A549 (cell line): ENCODE measurements at regions of chr12 and their contacts with region 1.

Region 1: GRCh38 chr12:96219698-96220206 is 25.6 kb downstream of the ELK3 start:
- DNase-seq: peak; percentile 98 to 99
- ATAC-seq: peak; percentile 97
- H3K4me3 ChIP-seq: peak overlapping the region; percentile 33
- H3K27ac ChIP-seq: peak overlapping the region; percentile 98
- H3K4me1 ChIP-seq: peaks cover 54% of the 10 kb centered on the region
- CTCF ChIP-seq: no peak
- EP300 ChIP-seq: peak in 1 of 2 experiments; percentile 31; a peak in 2 of 5 replicates
- POLR2A ChIP-seq: peak; percentile 75
- RAD21 ChIP-seq: peak; percentile 20 to 29; a peak in 1 of 5 replicates

Region 2: DNA sequence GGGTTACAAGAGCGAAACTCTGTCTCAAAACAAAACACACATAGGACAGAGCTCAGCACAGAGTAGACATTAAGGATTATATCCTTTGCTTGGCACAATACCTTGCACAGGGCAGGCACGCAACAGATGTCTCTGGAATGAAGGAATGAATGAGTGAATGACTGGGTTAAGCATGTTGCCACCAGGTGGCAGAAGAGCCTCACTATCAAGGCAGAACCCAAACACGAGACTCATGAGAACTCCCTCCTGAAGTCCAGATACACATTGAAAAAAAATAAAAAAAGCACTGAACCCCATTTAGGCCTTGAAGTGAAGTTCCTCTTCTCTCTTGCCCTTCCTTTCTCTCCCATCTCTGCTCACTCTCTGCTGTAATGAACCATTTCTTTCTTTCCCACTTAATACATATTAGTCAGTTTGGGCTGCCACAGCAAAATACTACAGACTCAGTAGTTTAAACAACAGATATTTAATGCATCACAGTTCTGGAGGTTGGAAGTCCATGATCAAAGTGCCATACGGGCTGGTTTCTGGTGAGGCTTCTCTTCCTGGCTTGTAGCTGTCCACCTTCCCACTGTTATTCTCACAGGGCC is 157.8 kb before region 1 on chr12:
- CTCF ChIA-PET with region 1: interaction called, 194 read pairs
- POLR2A ChIA-PET with region 1: no interaction called
- DNase-seq: peak; percentile 77 to 87
- ATAC-seq: peak; percentile 92 to 97
- H3K4me3 ChIP-seq: no peak overlapping the region
- H3K27ac ChIP-seq: peak overlapping the region in 1 of 2 experiments; percentile 8; a peak in 1 of 6 replicates
- H3K4me1 ChIP-seq: no peaks in the 10 kb centered on the region
- CTCF ChIP-seq: peak; percentile 87
- EP300 ChIP-seq: no peak
- POLR2A ChIP-seq: no peak
- RAD21 ChIP-seq: peak; percentile 97 to 99

Region 3: GRCh38 chr12:96143392-96143791 is 76.4 kb before region 1 on chr12:
- CTCF ChIA-PET with region 1: no interaction called
- POLR2A ChIA-PET with region 1: no interaction called
- DNase-seq: no peak
- ATAC-seq: no peak
- H3K4me3 ChIP-seq: no peak overlapping the region
- H3K27ac ChIP-seq: no peak overlapping the region
- H3K4me1 ChIP-seq: no peaks in the 10 kb centered on the region
- CTCF ChIP-seq: no peak
- EP300 ChIP-seq: no peak
- POLR2A ChIP-seq: no peak
- RAD21 ChIP-seq: no peak

Region 4: DNA sequence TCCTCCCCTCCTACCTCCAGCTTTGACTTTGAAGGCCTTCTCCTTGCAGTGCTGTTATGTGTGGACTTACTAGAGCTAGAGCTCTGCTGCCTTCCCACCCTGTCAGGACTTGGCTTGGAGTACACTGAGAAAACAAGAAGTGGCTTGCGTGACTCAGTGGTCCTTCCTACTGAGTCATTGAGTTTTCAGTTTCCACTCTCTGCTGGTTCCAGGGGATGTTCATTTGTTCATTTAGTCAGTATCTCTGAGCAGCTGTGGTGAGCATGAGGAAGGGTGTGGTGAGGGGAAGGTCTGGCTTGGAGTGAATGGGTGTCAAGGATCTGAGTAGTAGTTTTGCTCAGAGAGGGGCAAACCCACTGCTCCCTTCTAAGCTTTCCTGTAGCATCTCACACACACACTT is 42.7 kb before region 1 on chr12:
- CTCF ChIA-PET with region 1: interaction called, 15 read pairs
- POLR2A ChIA-PET with region 1: no interaction called
- DNase-seq: no peak
- ATAC-seq: no peak
- H3K4me3 ChIP-seq: no peak overlapping the region
- H3K27ac ChIP-seq: no peak overlapping the region
- H3K4me1 ChIP-seq: no peaks in the 10 kb centered on the region
- CTCF ChIP-seq: no peak
- EP300 ChIP-seq: no peak
- POLR2A ChIP-seq: no peak
- RAD21 ChIP-seq: no peak

Region 5: GRCh38 chr12:96208801-96209549 is 10.8 kb before region 1 on chr12:
- CTCF ChIA-PET with region 1: interaction called, 41 read pairs
- POLR2A ChIA-PET with region 1: interaction called, 7 read pairs
- DNase-seq: no peak
- ATAC-seq: peak; percentile 41 to 57; a peak in 5 of 6 replicates
- H3K4me3 ChIP-seq: no peak overlapping the region
- H3K27ac ChIP-seq: 0 out of 6 replicates have a peak overlapping the region, but pooled peaks of 1 of the 2 experiments have one; percentile 25
- H3K4me1 ChIP-seq: peaks cover 16% of the 10 kb centered on the region
- CTCF ChIP-seq: no peak; the same call in 2 of the 3 replicates
- EP300 ChIP-seq: no peak
- POLR2A ChIP-seq: 0 out of 2 replicates have a peak, but pooled peaks have one; percentile 19
- RAD21 ChIP-seq: peak in 1 of 2 experiments; percentile 33; a peak in 2 of 5 replicates

Region 6: GRCh38 chr12:96399919-96400797 is 180.4 kb after region 1 on chr12 and contains the start of gene CDK17:
- CTCF ChIA-PET with region 1: interaction called, 19 read pairs
- POLR2A ChIA-PET with region 1: interaction called, 27 read pairs
- DNase-seq: peak; percentile 78 to 86
- ATAC-seq: peak; percentile 66 to 77
- H3K4me3 ChIP-seq: peak within 1 kb of the TSS; percentile 90
- H3K27ac ChIP-seq: peak within 1 kb of the TSS; percentile 96
- H3K4me1 ChIP-seq: peaks cover 33% of the 10 kb centered on the region
- CTCF ChIP-seq: peak; percentile 90
- EP300 ChIP-seq: no peak
- POLR2A ChIP-seq: peak; percentile 47
- RAD21 ChIP-seq: peak; percentile 43 to 79
- polyA plus RNA-seq, gene CDK17: 34.5 and 43.5 TPM in 2 replicates